ENCODE measurements at regions of chrX and their contacts with region 1.

Region 1: DNA sequence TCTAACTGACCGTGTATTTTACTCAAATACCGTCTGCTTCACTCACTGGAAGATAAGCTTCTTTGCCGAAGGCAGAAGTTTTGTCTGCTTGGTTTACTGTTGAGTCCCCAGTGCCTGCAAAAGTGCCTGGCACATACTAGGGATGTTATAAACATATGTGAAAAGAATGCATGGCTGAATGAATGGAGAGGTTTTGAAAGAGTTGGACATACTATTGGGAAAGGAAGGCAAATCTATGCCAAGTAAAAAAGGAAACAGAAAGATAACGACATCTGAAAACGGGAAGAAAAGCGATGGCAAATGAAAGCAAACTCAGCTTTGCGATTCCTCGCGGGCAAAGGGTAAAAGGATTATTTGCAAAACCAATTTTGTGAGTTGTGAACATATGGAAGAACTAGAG is 21.7 kb downstream of the ADGRG2 start:
- DNase-seq: no peak
- H3K4me3 ChIP-seq: no peak overlapping the region
- CTCF ChIP-seq: no peak

Region 2: GRCh38 chrX:19168609-19169008 is 68.0 kb after region 1 on chrX:
- in situ Hi-C with region 1: loop called (anchors 5 kb)
- DNase-seq: no peak
- H3K4me3 ChIP-seq: no peak overlapping the region
- CTCF ChIP-seq: no peak

Measured in astrocyte of the cerebellum (primary cell).